ENCODE measurements at regions of chr10 and their contacts with region 1.

Region 1: GRCh38 chr10:11145495-11145855 is 127.8 kb downstream of the CELF2 start:
- DNase-seq: no peak
- H3K4me3 ChIP-seq: no peak overlapping the region
- CTCF ChIP-seq: no peak
- POLR2A ChIP-seq: no peak

Region 2: GRCh38 chr10:11080564-11080984 is 64.9 kb before region 1 on chr10:
- intact Hi-C with region 1: no loop called
- DNase-seq: no peak
- H3K4me3 ChIP-seq: no peak overlapping the region
- CTCF ChIP-seq: no peak
- POLR2A ChIP-seq: no peak

Region 3: GRCh38 chr10:11131112-11131639 is 14.3 kb before region 1 on chr10:
- intact Hi-C with region 1: loop called (anchors 1 kb)
- DNase-seq: peak in 1 of 2 donors; percentile 39
- H3K4me3 ChIP-seq: no peak overlapping the region
- CTCF ChIP-seq: no peak
- POLR2A ChIP-seq: no peak

Region 4: GRCh38 chr10:11863353-11864109 is 718.1 kb after region 1 on chr10:
- intact Hi-C with region 1: no loop called
- DNase-seq: no peak
- H3K4me3 ChIP-seq: no peak overlapping the region
- CTCF ChIP-seq: no peak
- POLR2A ChIP-seq: no peak

Region 5: DNA sequence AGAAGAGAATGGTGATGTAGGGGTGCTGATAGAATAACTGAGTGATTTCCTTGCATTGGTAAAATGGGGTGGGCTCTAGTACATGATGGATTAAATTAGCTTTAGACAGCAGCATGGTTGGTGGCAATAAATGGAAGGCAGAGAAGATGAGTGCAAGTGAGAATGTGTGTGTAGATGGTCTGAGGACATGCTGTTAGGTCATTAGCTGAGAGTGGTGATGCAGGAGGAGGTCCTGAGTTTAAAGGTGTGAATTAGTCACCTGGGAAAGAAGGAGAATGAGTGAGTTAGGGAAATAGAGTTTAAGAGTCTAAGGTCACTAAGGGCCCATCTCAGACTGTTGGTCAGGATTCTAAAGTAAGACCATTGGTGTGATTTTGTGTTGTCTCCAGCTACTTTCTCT is 966.1 kb after region 1 on chr10:
- intact Hi-C with region 1: loop called (anchors 10 kb)
- DNase-seq: no peak
- H3K4me3 ChIP-seq: no peak overlapping the region
- CTCF ChIP-seq: no peak
- POLR2A ChIP-seq: no peak